ENCODE measurements at regions of chr5 and their contacts with region 1.

Region 1: GRCh38 chr5:151740336-151740942 is 18.0 kb downstream of the ATOX1 start:
- DNase-seq: peak; percentile 96
- ATAC-seq: peak; percentile 61
- H3K4me3 ChIP-seq: no peak overlapping the region
- H3K27ac ChIP-seq: peak overlapping the region; percentile 100
- H3K4me1 ChIP-seq: peaks cover 23% of the 10 kb centered on the region
- H3K27me3 ChIP-seq: no peaks in the 10 kb centered on the region
- CTCF ChIP-seq: peak; percentile 86
- POLR2A ChIP-seq: peak; percentile 68
- RAD21 ChIP-seq: peak; percentile 81

Region 2: DNA sequence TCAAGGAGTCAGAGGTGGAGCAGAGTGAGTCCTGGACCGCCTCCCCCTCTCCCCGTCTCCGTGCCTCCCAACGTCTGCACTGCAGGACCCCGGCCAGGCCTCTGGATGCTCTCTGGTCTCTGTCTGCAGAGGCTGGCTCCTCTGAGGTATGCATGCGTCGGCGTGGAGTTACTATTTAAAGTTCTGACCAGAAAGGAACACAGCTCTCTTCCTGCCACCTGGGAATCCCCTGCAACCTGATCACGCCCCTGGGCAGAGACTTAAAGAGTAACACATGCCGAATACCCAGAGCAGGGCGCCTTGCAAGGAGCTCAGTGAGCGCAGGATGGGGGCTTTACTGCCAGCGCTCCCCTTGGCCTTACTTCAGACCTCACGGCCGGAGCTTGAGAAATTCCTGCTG is 598.9 kb before region 1 on chr5:
- CTCF ChIA-PET with region 1: no interaction called
- POLR2A ChIA-PET with region 1: no interaction called
- dilution Hi-C with region 1: no loop called
- in situ Hi-C with region 1: loop called (anchors 10 kb)
- intact Hi-C with region 1: no loop called
- DNase-seq: peak; percentile 25
- ATAC-seq: no peak; the same call in none of the 2 replicates
- H3K4me3 ChIP-seq: no peak overlapping the region
- H3K27ac ChIP-seq: no peak overlapping the region
- H3K4me1 ChIP-seq: peaks cover 2% of the 10 kb centered on the region; the same call in 1 of the 2 replicates
- H3K27me3 ChIP-seq: no peaks in the 10 kb centered on the region
- CTCF ChIP-seq: no peak
- POLR2A ChIP-seq: no peak
- RAD21 ChIP-seq: no peak

Region 3: GRCh38 chr5:151303666-151304065 is 436.8 kb before region 1 on chr5 and contains the start of gene SLC36A3:
- CTCF ChIA-PET with region 1: no interaction called
- POLR2A ChIA-PET with region 1: no interaction called
- dilution Hi-C with region 1: no loop called
- in situ Hi-C with region 1: no loop called
- intact Hi-C with region 1: no loop called
- DNase-seq: no peak
- ATAC-seq: no peak
- H3K4me3 ChIP-seq: no peak within 1 kb of the TSS
- H3K27ac ChIP-seq: no peak within 1 kb of the TSS
- H3K4me1 ChIP-seq: no peaks in the 10 kb centered on the region
- H3K27me3 ChIP-seq: peaks cover 4% of the 10 kb centered on the region; the same call in 1 of the 2 replicates
- CTCF ChIP-seq: no peak
- POLR2A ChIP-seq: no peak
- RAD21 ChIP-seq: no peak
- total RNA-seq, gene SLC36A3: not detected in 2 replicates

Region 4: GRCh38 chr5:151470439-151470838 is 270.0 kb before region 1 on chr5:
- CTCF ChIA-PET with region 1: no interaction called
- POLR2A ChIA-PET with region 1: no interaction called
- dilution Hi-C with region 1: no loop called
- in situ Hi-C with region 1: loop called (anchors 10 kb)
- intact Hi-C with region 1: no loop called
- DNase-seq: peak; percentile 81
- ATAC-seq: peak; percentile 73
- H3K4me3 ChIP-seq: no peak overlapping the region
- H3K27ac ChIP-seq: 0 out of 2 replicates have a peak overlapping the region, but pooled peaks have one; percentile 19
- H3K4me1 ChIP-seq: peaks cover 12% of the 10 kb centered on the region
- H3K27me3 ChIP-seq: no peaks in the 10 kb centered on the region
- CTCF ChIP-seq: no peak
- POLR2A ChIP-seq: no peak
- RAD21 ChIP-seq: no peak

Region 5: GRCh38 chr5:151651997-151652645 is 88.3 kb before region 1 on chr5:
- CTCF ChIA-PET with region 1: interaction called, 55 read pairs
- POLR2A ChIA-PET with region 1: no interaction called
- dilution Hi-C with region 1: no loop called
- in situ Hi-C with region 1: no loop called
- intact Hi-C with region 1: no loop called
- DNase-seq: peak; percentile 75
- ATAC-seq: peak; percentile 100
- H3K4me3 ChIP-seq: no peak overlapping the region
- H3K27ac ChIP-seq: no peak overlapping the region
- H3K4me1 ChIP-seq: peaks cover 2% of the 10 kb centered on the region; the same call in 1 of the 2 replicates
- H3K27me3 ChIP-seq: peaks cover 7% of the 10 kb centered on the region; the same call in 1 of the 2 replicates
- CTCF ChIP-seq: peak; percentile 98
- POLR2A ChIP-seq: no peak
- RAD21 ChIP-seq: peak; percentile 94

Region 6: GRCh38 chr5:151686674-151687407 is 53.6 kb before region 1 on chr5 and contains the start of gene SPARC:
- CTCF ChIA-PET with region 1: interaction called, 36 read pairs
- POLR2A ChIA-PET with region 1: interaction called, 70 read pairs
- dilution Hi-C with region 1: no loop called
- in situ Hi-C with region 1: no loop called
- intact Hi-C with region 1: loop called (anchors 1 kb)
- DNase-seq: peak; percentile 96
- ATAC-seq: peak; percentile 85
- H3K4me3 ChIP-seq: peak within 1 kb of the TSS; percentile 84
- H3K27ac ChIP-seq: peak within 1 kb of the TSS; percentile 96
- H3K4me1 ChIP-seq: peaks cover 20% of the 10 kb centered on the region
- H3K27me3 ChIP-seq: no peaks in the 10 kb centered on the region
- CTCF ChIP-seq: no peak
- POLR2A ChIP-seq: peak; percentile 99
- RAD21 ChIP-seq: 0 out of 2 replicates have a peak, but pooled peaks have one; percentile 15
- total RNA-seq, gene SPARC: 1,186 and 1,450 TPM in 2 replicates

Region 7: GRCh38 chr5:151771259-151772028 is 31.0 kb after region 1 on chr5 and contains the start of gene G3BP1:
- CTCF ChIA-PET with region 1: interaction called, 6 read pairs
- POLR2A ChIA-PET with region 1: interaction called, 4 read pairs
- dilution Hi-C with region 1: no loop called
- in situ Hi-C with region 1: no loop called
- intact Hi-C with region 1: loop called (anchors 1 kb)
- DNase-seq: peak; percentile 100
- ATAC-seq: peak; percentile 86
- H3K4me3 ChIP-seq: peak within 1 kb of the TSS; percentile 63
- H3K27ac ChIP-seq: peak within 1 kb of the TSS; percentile 80
- H3K4me1 ChIP-seq: peaks cover 5% of the 10 kb centered on the region; the same call in 1 of the 2 replicates
- H3K27me3 ChIP-seq: no peaks in the 10 kb centered on the region
- CTCF ChIP-seq: peak; percentile 96
- POLR2A ChIP-seq: peak; percentile 97
- RAD21 ChIP-seq: peak; percentile 79
- total RNA-seq, gene G3BP1: 272 and 482 TPM in 2 replicates